ENCODE measurements at regions of chr7 and their contacts with region 1.

Region 1: GRCh38 chr7:130118294-130118693 is 48.0 kb downstream of the KLHDC10 start:
- DNase-seq: no peak
- ATAC-seq: no peak
- H3K4me3 ChIP-seq: no peak overlapping the region
- H3K27ac ChIP-seq: no peak overlapping the region
- H3K4me1 ChIP-seq: peaks cover 6% of the 10 kb centered on the region; the same call in 1 of the 3 replicates
- CTCF ChIP-seq: no peak
- EP300 ChIP-seq: no peak
- POLR2A ChIP-seq: no peak
- RAD21 ChIP-seq: no peak

Region 2: GRCh38 chr7:130096243-130096827 is 22.0 kb before region 1 on chr7:
- CTCF ChIA-PET with region 1: no interaction called
- POLR2A ChIA-PET with region 1: no interaction called
- DNase-seq: no peak
- ATAC-seq: no peak
- H3K4me3 ChIP-seq: no peak overlapping the region
- H3K27ac ChIP-seq: no peak overlapping the region
- H3K4me1 ChIP-seq: peaks cover 9% of the 10 kb centered on the region; the same call in 2 of the 3 replicates
- CTCF ChIP-seq: peak; percentile 39
- EP300 ChIP-seq: no peak
- POLR2A ChIP-seq: no peak
- RAD21 ChIP-seq: peak; percentile 18 to 29; a peak in 1 of 5 replicates

Region 3: DNA sequence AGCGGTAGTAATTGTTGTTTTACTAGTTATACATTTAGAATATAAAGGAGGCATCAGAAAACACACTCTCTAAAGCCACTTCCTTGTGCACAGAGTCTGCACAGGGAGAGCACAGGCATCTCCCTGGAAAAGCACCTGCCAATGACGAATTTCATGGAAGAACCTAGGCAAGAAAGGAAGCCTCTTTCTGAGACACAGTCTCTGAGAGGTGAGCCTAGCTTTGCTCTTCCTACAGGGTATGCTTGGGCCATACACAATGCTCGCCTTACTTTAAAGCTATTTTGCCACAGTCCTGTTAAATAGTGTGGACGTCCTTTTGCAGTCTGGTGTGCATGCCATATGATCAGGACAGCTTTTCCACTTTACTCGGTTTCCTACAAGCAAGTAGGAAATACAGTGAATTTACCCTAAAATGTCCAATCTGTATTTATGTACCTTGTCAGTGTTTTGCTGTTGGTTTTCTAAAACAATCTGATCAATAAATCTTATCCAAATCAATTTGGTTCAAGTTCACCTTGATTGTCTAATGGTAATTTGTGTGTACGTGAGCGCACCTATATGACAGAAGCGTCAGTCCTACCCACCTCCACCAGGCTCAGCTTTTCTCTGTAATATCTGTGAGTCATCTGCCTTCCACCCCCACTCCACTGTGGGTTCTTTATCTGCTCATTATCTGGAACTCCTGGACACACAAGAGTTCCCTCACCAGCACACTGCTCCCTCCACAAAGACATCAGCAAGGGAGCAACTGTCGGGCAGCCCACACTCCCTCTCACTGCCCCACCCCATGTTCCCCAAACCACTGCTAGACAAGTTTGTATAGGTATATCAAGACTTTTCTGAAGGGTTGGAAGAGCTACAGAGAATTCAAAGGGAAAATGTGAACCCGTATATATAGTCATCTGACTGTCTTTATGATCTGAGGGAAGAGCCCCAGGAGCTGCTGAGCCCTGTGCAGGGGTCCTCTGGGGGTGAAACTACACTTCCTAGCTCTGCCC is 17.2 kb after region 1 on chr7:
- CTCF ChIA-PET with region 1: no interaction called
- POLR2A ChIA-PET with region 1: no interaction called
- DNase-seq: no peak
- ATAC-seq: no peak
- H3K4me3 ChIP-seq: no peak overlapping the region
- H3K27ac ChIP-seq: no peak overlapping the region
- H3K4me1 ChIP-seq: peaks cover 6% of the 10 kb centered on the region; the same call in 1 of the 3 replicates
- CTCF ChIP-seq: no peak
- EP300 ChIP-seq: no peak
- POLR2A ChIP-seq: no peak
- RAD21 ChIP-seq: no peak

Region 4: GRCh38 chr7:130392456-130392871 is 274.2 kb after region 1 on chr7:
- CTCF ChIA-PET with region 1: no interaction called
- POLR2A ChIA-PET with region 1: interaction called, 11 read pairs
- DNase-seq: no peak
- ATAC-seq: no peak
- H3K4me3 ChIP-seq: no peak overlapping the region
- H3K27ac ChIP-seq: no peak overlapping the region
- H3K4me1 ChIP-seq: no peaks in the 10 kb centered on the region
- CTCF ChIP-seq: no peak
- EP300 ChIP-seq: no peak
- POLR2A ChIP-seq: no peak
- RAD21 ChIP-seq: no peak

Measured in A549 (cell line).